ENCODE measurements at regions of chr16 and their contacts with region 1.

Region 1: GRCh38 chr16:30407102-30407803 is at the start of gene ZNF771:
- DNase-seq: peak; percentile 93
- ATAC-seq: peak; percentile 91
- H3K4me3 Mint-ChIP-seq: peak within 1 kb of the TSS; percentile 83
- H3K27ac Mint-ChIP-seq: peak within 1 kb of the TSS; percentile 91
- H3K4me1 Mint-ChIP-seq: peaks cover 29% of the 10 kb centered on the region
- H3K27me3 Mint-ChIP-seq: peaks cover 11% of the 10 kb centered on the region
- total RNA-seq, gene ZNF771: 3.3 to 3.9 TPM

Region 2: DNA sequence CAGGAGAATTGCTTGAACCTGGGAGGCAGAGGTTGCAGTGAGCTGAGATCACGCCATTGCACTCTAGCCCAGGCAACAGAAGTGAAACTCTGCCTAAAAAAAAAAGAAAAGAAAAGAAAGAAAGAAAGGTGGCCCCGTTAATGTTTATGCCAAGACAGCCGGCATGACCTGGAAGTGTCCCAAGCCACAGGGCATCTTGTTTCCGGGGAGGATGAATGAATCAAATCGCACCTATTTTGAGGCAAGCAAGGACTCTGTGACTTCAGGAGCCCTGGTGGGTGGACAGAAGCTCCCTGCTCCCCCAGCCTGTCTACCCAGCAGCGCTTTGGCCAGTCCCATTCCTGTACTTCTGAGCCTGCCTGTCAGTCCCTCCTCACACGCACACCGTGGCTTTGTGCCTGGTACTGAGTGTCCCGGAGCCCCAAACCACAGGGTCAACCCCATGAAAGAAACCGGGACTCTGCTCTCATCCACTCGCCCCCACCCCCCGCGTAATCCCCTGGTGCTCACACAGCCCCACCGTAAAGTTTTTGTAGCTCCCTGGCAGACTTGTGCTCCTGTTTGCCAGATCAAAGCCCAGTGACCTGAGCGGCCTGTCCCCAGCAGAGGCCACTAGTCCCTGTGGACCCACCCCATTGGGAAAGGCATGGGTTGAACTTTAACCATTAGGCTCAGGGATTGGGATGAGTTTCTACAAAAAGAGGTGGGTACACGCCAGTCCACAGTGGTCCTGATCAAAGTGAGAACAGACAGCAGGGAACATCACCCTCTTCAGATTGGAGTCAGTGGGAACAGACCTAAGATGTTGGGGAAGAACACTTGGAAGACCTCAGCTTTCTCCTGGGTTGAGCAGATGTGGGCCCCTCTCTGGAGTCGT is 71.4 kb before region 1 on chr16:
- CTCF ChIA-PET with region 1: interaction called, 13 read pairs
- POLR2A ChIA-PET with region 1: no interaction called
- DNase-seq: no peak
- ATAC-seq: peak; percentile 6
- H3K4me3 Mint-ChIP-seq: peak overlapping the region; percentile 81
- H3K27ac Mint-ChIP-seq: peak overlapping the region; percentile 84
- H3K4me1 Mint-ChIP-seq: peaks cover 31% of the 10 kb centered on the region
- H3K27me3 Mint-ChIP-seq: no peaks in the 10 kb centered on the region

Region 3: DNA sequence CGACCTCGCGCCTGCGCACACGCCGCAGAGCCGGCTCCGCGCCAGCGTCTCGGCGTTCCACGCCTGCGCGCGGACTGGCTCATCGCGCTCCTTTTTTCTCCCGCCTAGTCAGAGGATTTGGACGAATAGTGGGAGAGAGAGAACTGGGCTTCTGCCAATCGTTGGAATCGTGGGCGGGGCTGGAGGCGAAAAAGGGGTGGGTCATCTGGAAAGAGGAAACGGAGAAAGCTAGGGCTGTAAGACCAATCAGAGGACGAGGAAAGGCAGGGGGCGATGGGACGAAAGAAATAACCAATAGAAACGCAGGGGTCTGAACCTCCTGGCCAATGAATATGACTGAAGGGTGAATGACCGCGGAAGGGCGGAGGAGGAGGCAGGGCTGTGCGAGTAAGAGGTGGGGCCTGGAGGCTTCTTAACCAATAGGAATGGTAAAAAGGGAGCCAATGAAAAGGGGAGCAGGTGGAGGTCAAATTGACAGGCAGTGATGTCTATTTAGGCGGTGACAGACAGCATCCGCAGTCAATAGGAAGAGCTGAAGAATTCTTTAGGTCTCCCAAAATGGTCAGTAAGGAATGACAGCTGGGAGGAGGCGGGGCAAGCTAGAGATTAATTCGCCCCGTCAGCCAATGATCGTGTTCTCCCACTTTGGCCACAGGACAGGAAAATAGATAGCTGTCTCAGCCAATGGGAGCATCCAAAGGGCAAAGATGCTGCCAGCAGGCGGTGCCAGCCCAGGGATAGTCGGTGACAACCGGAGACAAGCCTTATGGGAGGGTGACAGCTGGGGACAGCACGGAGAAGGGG is 36.6 kb before region 1 on chr16 and contains the start of gene TBC1D10B:
- CTCF ChIA-PET with region 1: interaction called, 36 read pairs
- POLR2A ChIA-PET with region 1: interaction called, 5 read pairs
- DNase-seq: peak; percentile 100
- ATAC-seq: peak; percentile 87
- H3K4me3 Mint-ChIP-seq: peak within 1 kb of the TSS; percentile 95
- H3K27ac Mint-ChIP-seq: peak within 1 kb of the TSS; percentile 92
- H3K4me1 Mint-ChIP-seq: peaks cover 45% of the 10 kb centered on the region
- H3K27me3 Mint-ChIP-seq: no peaks in the 10 kb centered on the region
- total RNA-seq, gene TBC1D10B: 75.4 to 75.7 TPM

Region 4: GRCh38 chr16:30378236-30379204 is 28.7 kb before region 1 on chr16:
- CTCF ChIA-PET with region 1: interaction called, 19 read pairs
- POLR2A ChIA-PET with region 1: interaction called, 17 read pairs
- DNase-seq: peak; percentile 99
- ATAC-seq: peak; percentile 88
- H3K4me3 Mint-ChIP-seq: peak overlapping the region; percentile 99
- H3K27ac Mint-ChIP-seq: peak overlapping the region; percentile 100
- H3K4me1 Mint-ChIP-seq: peaks cover 65% of the 10 kb centered on the region
- H3K27me3 Mint-ChIP-seq: no peaks in the 10 kb centered on the region

Region 5: GRCh38 chr16:30395155-30395991 is 11.9 kb before region 1 on chr16 and contains the start of gene ZNF48:
- CTCF ChIA-PET with region 1: interaction called, 79 read pairs
- POLR2A ChIA-PET with region 1: interaction called, 9 read pairs
- DNase-seq: peak; percentile 53
- ATAC-seq: peak; percentile 77
- H3K4me3 Mint-ChIP-seq: peak within 1 kb of the TSS; percentile 91
- H3K27ac Mint-ChIP-seq: peak within 1 kb of the TSS; percentile 77
- H3K4me1 Mint-ChIP-seq: peaks cover 55% of the 10 kb centered on the region
- H3K27me3 Mint-ChIP-seq: no peaks in the 10 kb centered on the region
- total RNA-seq, gene ZNF48: 13.5 to 13.8 TPM

Region 6: GRCh38 chr16:30417529-30418349 is 10.5 kb after region 1 on chr16:
- CTCF ChIA-PET with region 1: interaction called, 41 read pairs
- POLR2A ChIA-PET with region 1: interaction called, 8 read pairs
- DNase-seq: peak; percentile 92
- ATAC-seq: peak; percentile 88
- H3K4me3 Mint-ChIP-seq: peak overlapping the region; percentile 61
- H3K27ac Mint-ChIP-seq: peak overlapping the region; percentile 55
- H3K4me1 Mint-ChIP-seq: peaks cover 25% of the 10 kb centered on the region
- H3K27me3 Mint-ChIP-seq: no peaks in the 10 kb centered on the region

Region 7: GRCh38 chr16:30543055-30543454 is 135.8 kb after region 1 on chr16:
- CTCF ChIA-PET with region 1: no interaction called
- POLR2A ChIA-PET with region 1: no interaction called
- DNase-seq: no peak
- ATAC-seq: no peak
- H3K4me3 Mint-ChIP-seq: no peak overlapping the region
- H3K27ac Mint-ChIP-seq: no peak overlapping the region
- H3K4me1 Mint-ChIP-seq: peaks cover 3% of the 10 kb centered on the region
- H3K27me3 Mint-ChIP-seq: no peaks in the 10 kb centered on the region

Region 8: DNA sequence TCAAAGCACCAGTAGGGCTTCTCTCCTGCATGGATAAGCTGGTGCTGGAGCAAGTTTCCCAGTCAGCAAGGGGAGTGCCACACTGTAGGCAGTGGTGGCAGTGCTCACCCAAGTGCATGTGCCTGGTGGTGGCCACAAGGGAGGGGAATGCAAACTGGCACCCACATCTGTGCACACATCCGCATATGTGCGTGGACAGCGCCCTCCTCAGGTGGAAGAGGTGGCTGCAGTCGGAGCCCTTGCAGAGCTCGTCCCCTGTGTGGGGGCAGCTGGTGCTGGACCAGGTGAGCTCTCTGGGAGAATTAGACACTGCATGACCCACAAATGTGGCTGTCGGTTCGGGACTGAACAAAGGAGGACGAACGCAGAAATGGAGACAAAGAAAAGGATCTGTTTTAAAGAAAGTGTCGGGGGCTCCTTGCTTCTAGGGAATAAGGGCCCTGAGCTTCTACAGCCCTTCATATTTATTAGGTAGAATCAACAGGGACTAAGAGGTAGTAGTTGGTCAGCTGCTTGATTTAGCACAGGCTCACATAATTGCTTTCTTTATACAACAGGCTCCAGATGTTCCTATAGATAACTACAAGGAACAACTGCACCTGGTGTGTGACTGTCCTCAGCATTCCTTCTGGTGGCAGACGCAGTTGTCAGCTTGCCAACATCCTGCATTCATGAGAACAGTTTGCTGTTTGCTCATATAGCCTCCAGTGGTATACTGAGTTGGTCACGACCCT is 208.3 kb after region 1 on chr16:
- CTCF ChIA-PET with region 1: interaction called, 16 read pairs
- POLR2A ChIA-PET with region 1: no interaction called
- DNase-seq: peak; percentile 83
- ATAC-seq: peak; percentile 68
- H3K4me3 Mint-ChIP-seq: no peak overlapping the region
- H3K27ac Mint-ChIP-seq: no peak overlapping the region
- H3K4me1 Mint-ChIP-seq: peaks cover 14% of the 10 kb centered on the region
- H3K27me3 Mint-ChIP-seq: peaks cover 13% of the 10 kb centered on the region

Measured in activated CD8-positive, alpha-beta T cell treated with anti-CD3 and anti-CD28 coated beads, Interleukin-2, amount 10 ng/mL, durations not matched to agents 7 days and 5 days (primary cell).